Heart left ventricle (tissue), 16 donors: ENCODE measurements at regions of chr21 and their contacts with region 1.

Region 1: GRCh38 chr21:21907271-21907670 is 909.1 kb downstream of the NCAM2 start:
- DNase-seq: no peak
- ATAC-seq: no peak
- H3K4me3 ChIP-seq: no peak overlapping the region
- H3K27ac ChIP-seq: no peak overlapping the region
- H3K4me1 ChIP-seq: no peaks in the 10 kb centered on the region
- H3K27me3 ChIP-seq: no peaks in the 10 kb centered on the region
- CTCF ChIP-seq: no peak
- POLR2A ChIP-seq: no peak

Region 2: GRCh38 chr21:21952566-21952965 is 45.3 kb after region 1 on chr21:
- intact Hi-C with region 1: no loop called
- DNase-seq: no peak
- ATAC-seq: no peak
- H3K4me3 ChIP-seq: no peak overlapping the region
- H3K27ac ChIP-seq: no peak overlapping the region
- H3K4me1 ChIP-seq: no peaks in the 10 kb centered on the region
- H3K27me3 ChIP-seq: no peaks in the 10 kb centered on the region
- CTCF ChIP-seq: no peak
- POLR2A ChIP-seq: no peak

Region 3: GRCh38 chr21:21968810-21969209 is 61.5 kb after region 1 on chr21:
- intact Hi-C with region 1: loop called in 1 of 10 experiments (anchors 10 kb)
- DNase-seq: no peak
- ATAC-seq: no peak
- H3K4me3 ChIP-seq: no peak overlapping the region
- H3K27ac ChIP-seq: no peak overlapping the region
- H3K4me1 ChIP-seq: no peaks in the 10 kb centered on the region
- H3K27me3 ChIP-seq: no peaks in the 10 kb centered on the region
- CTCF ChIP-seq: no peak
- POLR2A ChIP-seq: no peak